GM10248 (cell line): ENCODE measurements at regions of chr12 and their contacts with region 1.

Region 1: GRCh38 chr12:68223083-68223747 is 2.4 kb downstream of the IL26 start:
- DNase-seq: peak; percentile 68
- CTCF ChIP-seq: peak; percentile 86

Region 2: GRCh38 chr12:68190301-68190700 is 32.9 kb before region 1 on chr12:
- CTCF ChIA-PET with region 1: interaction called, 10 read pairs
- POLR2A ChIA-PET with region 1: no interaction called
- DNase-seq: no peak
- CTCF ChIP-seq: no peak

Region 3: GRCh38 chr12:68236421-68237059 is 13.3 kb after region 1 on chr12:
- CTCF ChIA-PET with region 1: interaction called, 26 read pairs
- POLR2A ChIA-PET with region 1: no interaction called
- DNase-seq: peak; percentile 45
- CTCF ChIP-seq: no peak

Region 4: DNA sequence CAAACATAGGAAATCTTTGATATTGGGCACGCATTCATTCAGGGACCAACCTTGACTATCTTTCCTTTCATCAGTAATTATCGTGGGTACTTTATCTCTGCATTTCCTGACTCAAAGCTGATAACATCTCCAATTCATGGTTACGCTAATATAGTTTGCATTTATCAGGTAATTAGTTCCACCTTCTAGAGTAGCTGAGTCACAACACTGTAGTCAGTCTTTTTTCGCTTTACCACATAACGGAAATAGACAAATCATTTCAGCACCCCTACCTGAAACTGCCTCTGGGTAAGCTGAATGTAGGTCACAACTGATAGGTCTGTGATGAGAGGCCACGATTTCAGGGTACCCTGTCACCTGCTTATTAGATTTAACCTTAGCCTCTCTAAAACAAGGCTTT is 66.9 kb after region 1 on chr12:
- CTCF ChIA-PET with region 1: interaction called, 13 read pairs
- POLR2A ChIA-PET with region 1: no interaction called
- DNase-seq: peak; percentile 36
- CTCF ChIP-seq: no peak

Region 5: DNA sequence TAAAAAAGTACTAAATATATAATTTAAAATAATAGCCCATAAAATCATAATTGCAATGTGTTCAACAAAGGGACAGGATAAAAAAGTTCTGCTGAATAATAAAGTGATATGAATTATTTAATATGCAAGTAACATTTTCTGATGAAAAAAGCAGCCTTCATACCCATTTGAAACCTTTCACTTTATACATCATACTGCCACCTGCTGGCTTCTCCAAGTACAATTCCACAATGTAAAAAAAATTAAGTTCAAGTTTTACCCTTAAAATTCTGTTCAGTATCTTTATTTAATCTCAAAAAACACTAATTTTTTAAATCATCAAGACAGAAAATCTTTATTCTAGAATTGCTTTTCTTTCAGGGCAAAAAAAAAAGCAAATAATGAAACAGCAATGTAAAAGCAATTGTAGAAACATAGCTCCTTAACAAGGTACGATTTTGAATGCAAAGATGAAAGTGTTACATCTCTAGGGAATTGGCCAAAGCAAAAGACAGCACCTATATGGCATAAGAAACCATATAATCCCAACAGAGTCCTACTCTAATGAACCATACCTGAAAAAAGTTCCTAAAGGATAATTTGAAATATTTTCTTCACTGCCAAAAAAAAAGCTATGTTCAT is 93.9 kb after region 1 on chr12:
- CTCF ChIA-PET with region 1: interaction called, 94 read pairs
- POLR2A ChIA-PET with region 1: no interaction called
- DNase-seq: peak; percentile 52
- CTCF ChIP-seq: peak; percentile 55